H1 (cell line): ENCODE measurements at regions of chr1 and their contacts with region 1.

Region 1: DNA sequence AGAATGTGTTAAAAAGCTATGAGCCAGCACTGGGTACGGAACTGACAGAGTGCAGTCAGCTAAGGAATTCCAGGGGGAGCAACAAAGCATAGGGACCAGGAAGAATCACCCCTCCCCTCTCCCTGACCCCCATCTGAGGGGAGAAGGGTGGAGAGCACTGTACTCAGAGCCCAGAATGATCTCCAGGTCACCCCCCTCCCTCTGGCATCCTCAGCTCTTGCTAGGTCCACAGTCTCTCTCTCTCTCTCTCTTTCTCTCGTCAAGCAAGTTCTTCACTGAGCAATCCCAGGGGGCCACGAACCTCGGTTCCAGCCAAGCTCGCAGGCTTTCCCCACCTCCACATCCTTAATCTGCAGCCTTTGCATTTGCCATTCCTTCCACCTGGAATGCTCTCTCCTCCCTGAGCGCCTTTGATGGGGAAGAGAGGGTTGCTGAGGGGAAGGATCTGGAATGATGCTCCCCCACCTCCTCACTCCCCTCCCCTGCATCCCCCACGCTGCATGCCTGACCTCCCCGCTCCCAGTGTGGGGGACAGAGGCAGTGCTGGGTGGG is 6.7 kb upstream of the WASF2 start:
- DNase-seq: peak in 1 of 2 experiments; percentile 76
- H3K4me3 ChIP-seq: peak overlapping the region in 2 of 4 experiments; percentile 7 to 36; a peak in 3 of 8 replicates
- H3K27ac ChIP-seq: peak overlapping the region; percentile 59; the same call in 1 of the 2 replicates
- H3K4me1 ChIP-seq: peaks cover 3 to 11% (median 6%) of the 10 kb centered on the region in 4 experiments; a peak in 6 of 7 replicates
- H3K27me3 ChIP-seq: no peaks in the 10 kb centered on the region
- CTCF ChIP-seq: peak; percentile 51 to 83 (median 69)
- EP300 ChIP-seq: peak in 1 of 2 experiments; percentile 69; a peak in 1 of 3 replicates
- POLR2A ChIP-seq: no peak
- RAD21 ChIP-seq: peak; percentile 61 to 62

Region 2: DNA sequence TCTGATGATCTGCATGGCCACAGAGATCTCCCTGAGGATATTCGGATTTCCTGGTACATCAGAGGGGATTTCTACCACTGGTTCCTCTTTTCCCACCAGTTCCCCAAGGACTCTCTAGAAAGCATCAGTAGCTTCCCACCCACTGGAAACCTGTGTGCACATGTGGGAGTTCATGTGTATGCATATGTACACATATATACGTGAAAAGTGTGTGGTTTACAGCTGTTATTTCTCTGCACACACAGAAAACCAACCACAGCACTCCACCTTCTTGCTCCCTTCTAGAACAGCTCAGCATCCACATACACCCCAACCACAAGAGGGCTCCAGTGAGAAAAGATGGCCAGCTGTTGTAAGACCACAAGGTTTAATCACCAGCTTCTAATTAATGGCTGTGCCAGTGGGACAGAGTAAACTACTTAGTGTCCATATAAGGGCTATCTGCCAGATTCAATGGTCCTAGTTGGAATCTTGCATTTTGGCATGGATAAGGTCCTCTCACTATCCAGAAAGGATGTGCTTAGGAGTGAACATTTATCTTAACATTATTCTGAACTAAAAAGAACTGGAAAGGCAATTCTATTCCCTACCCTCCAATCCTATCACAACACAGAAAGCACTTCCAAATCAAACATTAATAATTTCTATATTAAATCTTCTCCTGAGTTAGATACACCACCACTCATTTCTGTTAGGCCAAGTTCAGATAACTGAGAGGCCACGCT is 80.1 kb before region 1 on chr1:
- CTCF ChIA-PET with region 1: interaction called, 18 read pairs
- POLR2A ChIA-PET with region 1: interaction called, 4 read pairs
- DNase-seq: no peak
- H3K4me3 ChIP-seq: no peak overlapping the region
- H3K27ac ChIP-seq: no peak overlapping the region
- H3K4me1 ChIP-seq: peaks cover 5 to 12% (median 9%) of the 10 kb centered on the region in 4 experiments; a peak in 6 of 7 replicates
- H3K27me3 ChIP-seq: no peaks in the 10 kb centered on the region
- CTCF ChIP-seq: peak; percentile 46 to 90 (median 79)
- EP300 ChIP-seq: no peak
- POLR2A ChIP-seq: no peak
- RAD21 ChIP-seq: peak; percentile 70 to 80

Region 3: DNA sequence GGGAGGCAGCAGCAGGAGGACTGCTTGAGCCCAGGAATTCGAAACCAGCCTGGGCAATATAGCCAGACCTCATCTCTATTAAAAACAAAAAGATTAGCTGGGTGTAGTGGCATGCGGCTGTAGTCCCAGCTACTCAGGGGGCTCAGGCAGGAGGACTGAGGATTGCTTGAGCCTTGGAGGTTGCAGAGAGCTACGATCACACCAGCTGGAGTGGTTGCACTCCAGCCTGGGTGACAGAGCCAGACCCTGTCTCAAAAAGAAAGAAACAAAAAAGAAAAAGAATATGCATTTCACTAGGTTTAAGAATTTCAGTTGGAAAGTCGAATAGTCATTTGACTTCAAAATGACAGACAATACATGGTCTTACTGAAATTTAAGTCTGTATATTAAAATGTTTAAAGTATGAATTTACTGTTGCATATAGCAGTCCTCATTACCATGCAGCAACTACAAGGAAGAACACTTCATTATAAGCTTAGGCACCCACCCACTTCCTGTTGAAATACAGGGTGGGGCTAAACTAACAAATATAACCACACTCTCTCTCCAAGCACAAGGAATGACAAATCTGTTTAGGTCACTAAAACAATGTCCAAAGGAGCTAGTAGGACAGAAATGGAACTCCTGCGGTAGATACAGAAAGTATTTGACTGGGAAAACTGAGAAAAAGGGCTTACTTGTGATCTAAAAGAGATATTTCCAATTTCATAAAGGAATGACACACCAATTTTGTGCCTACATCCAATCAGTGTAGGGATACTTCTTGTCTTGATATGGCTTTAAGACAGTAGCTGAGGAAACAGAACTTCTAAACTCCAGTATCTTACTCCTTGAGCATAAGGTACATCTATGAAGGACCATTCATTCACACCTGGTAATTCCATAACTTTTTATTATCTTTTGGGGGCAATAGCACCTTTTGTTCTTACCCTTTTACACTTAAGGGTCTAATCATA is 60.2 kb before region 1 on chr1:
- CTCF ChIA-PET with region 1: interaction called, 11 read pairs
- POLR2A ChIA-PET with region 1: interaction called, 3 read pairs
- DNase-seq: no peak
- H3K4me3 ChIP-seq: no peak overlapping the region
- H3K27ac ChIP-seq: no peak overlapping the region
- H3K4me1 ChIP-seq: peaks cover 2 to 14% (median 5%) of the 10 kb centered on the region in 4 experiments; a peak in 5 of 7 replicates
- H3K27me3 ChIP-seq: no peaks in the 10 kb centered on the region
- CTCF ChIP-seq: no peak
- EP300 ChIP-seq: no peak
- POLR2A ChIP-seq: no peak
- RAD21 ChIP-seq: no peak

Region 4: GRCh38 chr1:27513958-27514357 is 17.3 kb after region 1 on chr1:
- CTCF ChIA-PET with region 1: interaction called, 10 read pairs
- POLR2A ChIA-PET with region 1: interaction called, 4 read pairs
- DNase-seq: no peak
- H3K4me3 ChIP-seq: no peak overlapping the region
- H3K27ac ChIP-seq: no peak overlapping the region
- H3K4me1 ChIP-seq: peaks cover 0 to 11% (median 5%) of the 10 kb centered on the region in 4 experiments; a peak in 6 of 7 replicates
- H3K27me3 ChIP-seq: no peaks in the 10 kb centered on the region
- CTCF ChIP-seq: no peak
- EP300 ChIP-seq: no peak
- POLR2A ChIP-seq: no peak
- RAD21 ChIP-seq: no peak

Region 5: DNA sequence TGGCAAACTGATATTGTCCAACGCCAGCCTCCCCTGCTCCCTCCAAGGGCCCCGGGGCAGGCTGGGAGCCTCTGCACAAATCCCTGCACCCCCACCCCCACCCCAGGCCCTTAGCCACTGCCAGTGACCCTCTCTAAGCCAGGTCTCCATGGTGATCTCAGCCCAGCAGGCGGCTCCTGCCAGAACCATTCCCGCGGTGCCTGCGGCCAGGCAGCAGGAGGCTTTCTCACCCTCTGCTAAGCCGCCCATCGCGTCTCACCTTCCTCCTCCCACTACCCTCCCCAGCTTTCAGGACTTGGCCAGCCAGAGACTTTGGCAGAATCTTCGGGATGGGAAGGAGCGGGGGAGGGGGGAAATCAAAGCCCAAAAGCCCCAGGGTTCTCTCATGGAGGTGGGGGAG is 40.1 kb after region 1 on chr1:
- CTCF ChIA-PET with region 1: interaction called, 13 read pairs
- POLR2A ChIA-PET with region 1: interaction called, 3 read pairs
- DNase-seq: peak in 1 of 2 experiments; percentile 66
- H3K4me3 ChIP-seq: no peak overlapping the region
- H3K27ac ChIP-seq: peak overlapping the region; percentile 11; the same call in 1 of the 2 replicates
- H3K4me1 ChIP-seq: peaks cover 12 to 33% (median 23%) of the 10 kb centered on the region in 4 experiments
- H3K27me3 ChIP-seq: no peaks in the 10 kb centered on the region
- CTCF ChIP-seq: no peak
- EP300 ChIP-seq: no peak
- POLR2A ChIP-seq: no peak
- RAD21 ChIP-seq: peak in 1 of 2 experiments; percentile 15; a peak in 1 of 4 replicates

Region 6: GRCh38 chr1:27959400-27960217 is 462.9 kb after region 1 on chr1 and contains the start of gene XKR8:
- CTCF ChIA-PET with region 1: no interaction called
- POLR2A ChIA-PET with region 1: no interaction called
- DNase-seq: peak; percentile 70 to 92
- H3K4me3 ChIP-seq: peak within 1 kb of the TSS; percentile 70 to 80 (median 72)
- H3K27ac ChIP-seq: peak within 1 kb of the TSS; percentile 84
- H3K4me1 ChIP-seq: peaks cover 0 to 11% (median 8%) of the 10 kb centered on the region in 4 experiments; a peak in 6 of 7 replicates
- H3K27me3 ChIP-seq: no peaks in the 10 kb centered on the region
- CTCF ChIP-seq: peak in 1 of 3 experiments; percentile 77; a peak in 2 of 4 replicates
- EP300 ChIP-seq: no peak
- POLR2A ChIP-seq: peak; percentile 37 to 78
- RAD21 ChIP-seq: no peak
- total RNA-seq, gene XKR8: 13.8 and 14.2 TPM in 2 replicates